HEK293 (cell line): ENCODE measurements at regions of chr17 and their contacts with region 1.

Region 1: GRCh38 chr17:47615766-47616424 is 33.8 kb upstream of the KPNB1 start:
- H3K4me3 ChIP-seq: no peak overlapping the region
- H3K27ac ChIP-seq: no peak overlapping the region
- H3K4me1 ChIP-seq: peaks cover 11% of the 10 kb centered on the region
- CTCF ChIP-seq: peak; percentile 41; the same call in 1 of the 2 replicates

Region 2: GRCh38 chr17:47229535-47230443 is 386.1 kb before region 1 on chr17:
- CTCF ChIA-PET with region 1: interaction called, 17 read pairs
- POLR2A ChIA-PET with region 1: no interaction called
- H3K4me3 ChIP-seq: no peak overlapping the region
- H3K27ac ChIP-seq: no peak overlapping the region; the same call in 1 of the 2 replicates
- H3K4me1 ChIP-seq: peaks cover 2% of the 10 kb centered on the region; the same call in 1 of the 2 replicates
- CTCF ChIP-seq: peak; percentile 80

Region 3: GRCh38 chr17:47470836-47471235 is 145.1 kb before region 1 on chr17:
- CTCF ChIA-PET with region 1: no interaction called
- POLR2A ChIA-PET with region 1: interaction called, 15 read pairs
- H3K4me3 ChIP-seq: no peak overlapping the region
- H3K27ac ChIP-seq: no peak overlapping the region
- H3K4me1 ChIP-seq: no peaks in the 10 kb centered on the region
- CTCF ChIP-seq: no peak

Region 4: DNA sequence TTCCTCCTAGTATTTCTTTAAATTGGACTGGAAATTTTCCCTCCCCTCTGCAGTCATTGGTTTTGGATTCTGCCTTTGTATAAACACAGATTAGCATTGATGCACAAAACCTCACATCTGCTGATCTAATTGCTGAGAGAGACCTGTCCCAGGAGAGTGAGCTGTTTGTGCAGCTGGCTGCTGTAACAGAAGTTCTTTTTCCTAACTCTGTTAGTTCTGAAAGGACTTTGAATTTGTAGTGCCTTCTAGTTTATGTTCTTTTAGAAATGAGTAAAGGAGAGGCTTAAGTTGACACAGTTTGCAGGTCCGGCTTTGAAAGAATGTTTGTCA is 11.3 kb before region 1 on chr17:
- CTCF ChIA-PET with region 1: interaction called, 41 read pairs
- POLR2A ChIA-PET with region 1: no interaction called
- H3K4me3 ChIP-seq: no peak overlapping the region
- H3K27ac ChIP-seq: no peak overlapping the region
- H3K4me1 ChIP-seq: peaks cover 12% of the 10 kb centered on the region
- CTCF ChIP-seq: no peak

Region 5: GRCh38 chr17:47633996-47634395 is 18.1 kb after region 1 on chr17:
- CTCF ChIA-PET with region 1: interaction called, 10 read pairs
- POLR2A ChIA-PET with region 1: interaction called, 5 read pairs
- H3K4me3 ChIP-seq: no peak overlapping the region
- H3K27ac ChIP-seq: no peak overlapping the region
- H3K4me1 ChIP-seq: no peaks in the 10 kb centered on the region
- CTCF ChIP-seq: no peak